ENCODE measurements at regions of chr9 and their contacts with region 1.

Region 1: DNA sequence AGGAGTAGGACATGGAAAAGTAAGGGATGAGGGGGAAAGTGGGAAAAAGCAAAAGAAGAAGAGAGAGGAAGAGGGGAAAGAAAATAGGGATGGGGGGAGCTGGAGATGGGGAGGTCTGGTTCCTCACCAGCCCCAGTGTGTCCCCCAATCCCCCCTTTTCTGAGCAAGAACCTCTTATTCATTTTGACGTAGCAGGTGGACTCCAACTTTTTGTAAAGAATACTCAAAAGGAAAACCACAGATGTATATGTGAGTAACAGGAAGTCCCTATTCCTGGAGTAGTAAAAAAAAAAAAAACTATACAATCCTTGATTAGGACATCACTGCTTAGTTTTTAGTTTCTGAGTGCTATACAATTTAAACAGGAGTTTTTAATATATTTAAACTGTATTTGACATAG is 3.9 kb upstream of the CFAP95 start:
- DNase-seq: no peak
- H3K4me3 Mint-ChIP-seq: no peak overlapping the region
- H3K27ac Mint-ChIP-seq: no peak overlapping the region
- H3K4me1 Mint-ChIP-seq: peaks cover 29% of the 10 kb centered on the region
- H3K27me3 Mint-ChIP-seq: peaks cover 26% of the 10 kb centered on the region

Region 2: GRCh38 chr9:69834591-69835184 is 18.0 kb after region 1 on chr9:
- CTCF ChIA-PET with region 1: no interaction called
- intact Hi-C with region 1: loop called (anchors 1 kb)
- DNase-seq: no peak
- H3K4me3 Mint-ChIP-seq: no peak overlapping the region
- H3K27ac Mint-ChIP-seq: no peak overlapping the region
- H3K4me1 Mint-ChIP-seq: peaks cover 27% of the 10 kb centered on the region
- H3K27me3 Mint-ChIP-seq: peaks cover 2% of the 10 kb centered on the region

Region 3: GRCh38 chr9:70043689-70044489 is 227.2 kb after region 1 on chr9 and contains the start of gene MAMDC2:
- CTCF ChIA-PET with region 1: no interaction called
- intact Hi-C with region 1: no loop called
- DNase-seq: no peak
- H3K4me3 Mint-ChIP-seq: peak within 1 kb of the TSS; percentile 14
- H3K27ac Mint-ChIP-seq: no peak within 1 kb of the TSS
- H3K4me1 Mint-ChIP-seq: peaks cover 5% of the 10 kb centered on the region
- H3K27me3 Mint-ChIP-seq: peaks cover 48% of the 10 kb centered on the region
- total RNA-seq, gene MAMDC2: not detected

Measured in activated naive CD4-positive, alpha-beta T cell treated with anti-CD3 and anti-CD28 coated beads for 36 hours (primary cell).